ENCODE measurements at regions of chr12 and their contacts with region 1.

Region 1: DNA sequence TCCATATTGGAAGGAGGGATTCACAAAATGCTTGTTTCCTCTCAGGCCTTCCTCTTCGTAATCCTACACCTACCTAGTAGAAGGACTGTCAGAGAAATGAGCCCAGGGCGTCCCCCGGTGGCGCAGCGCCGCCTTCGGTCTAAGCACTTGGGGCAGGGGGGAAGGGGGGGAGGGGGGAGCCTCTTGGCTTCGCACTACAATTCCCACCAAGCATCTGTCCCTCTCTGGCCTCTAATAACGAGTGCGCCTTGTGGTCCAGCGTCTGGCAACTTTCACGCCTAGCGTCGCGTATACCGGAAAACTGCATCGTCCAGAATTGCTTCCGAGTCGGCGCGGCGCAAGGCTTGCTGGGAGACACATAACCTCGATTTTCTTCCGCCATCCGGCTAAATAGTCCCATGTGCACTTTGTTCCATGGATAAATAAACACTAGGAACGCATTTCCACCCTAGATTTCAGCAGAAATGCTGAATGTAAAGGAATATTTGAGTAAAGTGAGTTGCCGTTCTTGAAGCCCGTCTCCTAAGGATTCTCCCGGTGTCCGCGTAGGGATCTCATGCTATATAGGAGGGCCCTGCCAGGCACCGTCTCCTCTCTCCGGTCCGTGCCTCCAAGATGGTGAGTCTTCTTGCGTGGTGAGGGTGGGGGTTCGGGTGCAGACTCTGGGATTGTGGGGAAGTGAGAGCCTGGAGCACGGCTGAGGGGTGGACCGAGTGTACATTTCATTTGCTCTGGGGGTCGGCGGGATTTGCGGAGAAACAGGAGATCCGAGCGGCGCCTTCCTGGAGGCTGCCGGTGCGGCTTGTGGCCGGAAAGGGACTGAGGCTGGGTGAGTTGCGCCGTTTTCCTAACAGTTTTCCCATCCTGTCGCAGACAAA is at the start of gene RPS26:
- DNase-seq: peak; percentile 81 to 99 (median 89)
- ATAC-seq: peak; percentile 92
- H3K4me3 ChIP-seq: peak within 1 kb of the TSS; percentile 95
- H3K4me3 Mint-ChIP-seq: peak within 1 kb of the TSS; percentile 94
- H3K27ac ChIP-seq: peak within 1 kb of the TSS; percentile 88 to 90
- H3K27ac Mint-ChIP-seq: peak within 1 kb of the TSS; percentile 86
- H3K4me1 ChIP-seq: peaks cover 32% of the 10 kb centered on the region
- H3K4me1 Mint-ChIP-seq: peaks cover 51% of the 10 kb centered on the region
- H3K27me3 ChIP-seq: no peaks in the 10 kb centered on the region
- H3K27me3 Mint-ChIP-seq: no peaks in the 10 kb centered on the region
- CTCF ChIP-seq: peak; percentile 43
- total RNA-seq, gene RPS26: 118 to 126 TPM

Region 2: GRCh38 chr12:55817346-55818139 is 224.2 kb before region 1 on chr12 and contains the starts of genes ORMDL2 and SARNP:
- CTCF ChIA-PET with region 1: no interaction called
- POLR2A ChIA-PET with region 1: no interaction called
- intact Hi-C with region 1: loop called in 1 of 2 experiments (anchors 10 kb)
- DNase-seq: peak; percentile 88 to 100 (median 92)
- ATAC-seq: peak; percentile 92
- H3K4me3 ChIP-seq: peak within 1 kb of the TSS; percentile 97
- H3K4me3 Mint-ChIP-seq: no peak within 1 kb of the TSS
- H3K27ac ChIP-seq: peak within 1 kb of the TSS; percentile 71 to 87
- H3K27ac Mint-ChIP-seq: no peak within 1 kb of the TSS
- H3K4me1 ChIP-seq: peaks cover 40% of the 10 kb centered on the region
- H3K4me1 Mint-ChIP-seq: peaks cover 28% of the 10 kb centered on the region
- H3K27me3 ChIP-seq: no peaks in the 10 kb centered on the region
- H3K27me3 Mint-ChIP-seq: no peaks in the 10 kb centered on the region
- CTCF ChIP-seq: no peak
- total RNA-seq, gene ORMDL2: 13.0 to 14.9 TPM
- total RNA-seq, gene SARNP: 38.2 to 38.6 TPM

Region 3: DNA sequence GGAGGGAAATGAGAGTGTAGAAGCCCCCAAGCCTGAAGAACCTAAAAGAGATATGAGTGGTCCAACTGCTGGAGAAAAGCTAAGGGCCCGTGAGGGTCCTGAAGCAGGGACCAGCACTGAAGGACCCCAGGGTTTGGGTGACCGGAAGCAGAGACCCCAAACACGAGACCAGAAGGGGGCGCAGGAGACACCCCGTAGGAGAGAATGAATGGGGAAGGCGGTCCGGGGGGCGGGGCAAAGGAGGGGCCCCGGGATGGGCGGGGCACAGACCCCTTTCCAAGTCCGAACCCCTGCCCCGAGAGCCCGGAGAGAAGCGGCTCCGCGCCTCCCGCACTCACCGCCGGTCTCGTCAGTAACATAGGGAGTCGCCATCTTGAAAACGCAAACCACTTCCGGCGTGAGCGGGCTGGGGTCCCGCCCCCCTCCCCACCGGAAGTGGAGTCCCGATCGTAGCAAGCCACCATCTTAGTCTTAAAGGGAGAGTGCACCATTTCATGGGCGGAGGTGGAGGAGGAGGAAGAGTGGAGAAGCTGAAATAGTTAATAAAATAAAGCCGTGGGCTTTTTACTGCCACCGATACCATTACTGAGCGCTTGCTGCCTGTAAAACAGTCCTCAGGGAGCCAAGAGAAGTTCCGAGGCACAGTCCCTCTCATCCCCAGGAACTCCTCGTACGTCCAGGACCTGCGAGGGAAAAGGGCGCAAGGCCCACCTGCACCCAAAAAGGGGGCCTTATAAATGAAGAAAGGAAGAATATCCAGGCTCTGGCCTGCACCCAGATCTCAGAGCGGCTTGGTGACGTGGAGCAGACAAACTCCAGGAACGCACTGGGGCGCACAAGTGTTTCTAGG is 114.8 kb before region 1 on chr12:
- CTCF ChIA-PET with region 1: interaction called, 3 read pairs
- POLR2A ChIA-PET with region 1: no interaction called
- intact Hi-C with region 1: loop called in 1 of 2 experiments (anchors 5 kb)
- DNase-seq: peak; percentile 83 to 96 (median 88)
- ATAC-seq: peak; percentile 32
- H3K4me3 ChIP-seq: peak overlapping the region; percentile 98
- H3K4me3 Mint-ChIP-seq: peak overlapping the region; percentile 96
- H3K27ac ChIP-seq: peak overlapping the region; percentile 72 to 93
- H3K27ac Mint-ChIP-seq: peak overlapping the region; percentile 97
- H3K4me1 ChIP-seq: peaks cover 45% of the 10 kb centered on the region
- H3K4me1 Mint-ChIP-seq: peaks cover 56% of the 10 kb centered on the region
- H3K27me3 ChIP-seq: no peaks in the 10 kb centered on the region
- H3K27me3 Mint-ChIP-seq: no peaks in the 10 kb centered on the region
- CTCF ChIP-seq: peak; percentile 86

Region 4: GRCh38 chr12:56007564-56008559 is 33.9 kb before region 1 on chr12:
- CTCF ChIA-PET with region 1: no interaction called
- POLR2A ChIA-PET with region 1: interaction called, 4 read pairs
- intact Hi-C with region 1: loop called in 1 of 2 experiments (anchors 1 kb)
- DNase-seq: peak; percentile 57 to 87 (median 64)
- ATAC-seq: peak; percentile 89
- H3K4me3 ChIP-seq: peak overlapping the region; percentile 70
- H3K4me3 Mint-ChIP-seq: peak overlapping the region; percentile 88
- H3K27ac ChIP-seq: peak overlapping the region; percentile 30 to 36
- H3K27ac Mint-ChIP-seq: peak overlapping the region; percentile 76
- H3K4me1 ChIP-seq: peaks cover 22% of the 10 kb centered on the region
- H3K4me1 Mint-ChIP-seq: peaks cover 19% of the 10 kb centered on the region
- H3K27me3 ChIP-seq: no peaks in the 10 kb centered on the region
- H3K27me3 Mint-ChIP-seq: no peaks in the 10 kb centered on the region
- CTCF ChIP-seq: no peak

Region 5: GRCh38 chr12:56224102-56224701 is 182.4 kb after region 1 on chr12 and contains the start of gene NABP2:
- CTCF ChIA-PET with region 1: no interaction called
- POLR2A ChIA-PET with region 1: interaction called, 3 read pairs
- intact Hi-C with region 1: loop called in 1 of 2 experiments (anchors 10 kb)
- DNase-seq: peak; percentile 73 to 96 (median 88)
- ATAC-seq: peak; percentile 66
- H3K4me3 ChIP-seq: peak within 1 kb of the TSS; percentile 70
- H3K4me3 Mint-ChIP-seq: peak within 1 kb of the TSS; percentile 98
- H3K27ac ChIP-seq: peak within 1 kb of the TSS; percentile 60 to 81
- H3K27ac Mint-ChIP-seq: peak within 1 kb of the TSS; percentile 100
- H3K4me1 ChIP-seq: peaks cover 56% of the 10 kb centered on the region
- H3K4me1 Mint-ChIP-seq: peaks cover 48% of the 10 kb centered on the region
- H3K27me3 ChIP-seq: no peaks in the 10 kb centered on the region
- H3K27me3 Mint-ChIP-seq: no peaks in the 10 kb centered on the region
- CTCF ChIP-seq: peak; percentile 88
- total RNA-seq, gene NABP2: 7.6 to 9.1 TPM

Region 6: GRCh38 chr12:56468216-56469006 is 426.6 kb after region 1 on chr12 and contains the start of gene SPRYD4:
- CTCF ChIA-PET with region 1: no interaction called
- POLR2A ChIA-PET with region 1: no interaction called
- intact Hi-C with region 1: loop called in 1 of 2 experiments (anchors 5 kb)
- DNase-seq: peak; percentile 88 to 98 (median 93)
- ATAC-seq: peak; percentile 90
- H3K4me3 ChIP-seq: peak within 1 kb of the TSS; percentile 87
- H3K4me3 Mint-ChIP-seq: peak within 1 kb of the TSS; percentile 96
- H3K27ac ChIP-seq: peak within 1 kb of the TSS; percentile 68 to 94
- H3K27ac Mint-ChIP-seq: peak within 1 kb of the TSS; percentile 97
- H3K4me1 ChIP-seq: peaks cover 29% of the 10 kb centered on the region
- H3K4me1 Mint-ChIP-seq: peaks cover 31% of the 10 kb centered on the region
- H3K27me3 ChIP-seq: no peaks in the 10 kb centered on the region
- H3K27me3 Mint-ChIP-seq: no peaks in the 10 kb centered on the region
- CTCF ChIP-seq: peak; percentile 34
- total RNA-seq, gene SPRYD4: 7.4 to 7.9 TPM

Measured in CD4-positive, alpha-beta T cell (primary cell).